Sigmoid colon (tissue), 7 donors: ENCODE measurements at regions of chr2 and their contacts with region 1.

Region 1: GRCh38 chr2:160970052-160970965 is 189.9 kb upstream of the TANK start:
- DNase-seq: no peak
- H3K4me3 ChIP-seq: peak overlapping the region in 2 of 4 donors; percentile 5 to 24
- H3K27ac ChIP-seq: peak overlapping the region; percentile 44 to 67 (median 48)
- H3K4me1 ChIP-seq: peaks cover 0 to 12% (median 6%) of the 10 kb centered on the region in 4 donors
- H3K27me3 ChIP-seq: no peaks in the 10 kb centered on the region
- CTCF ChIP-seq: peak; percentile 53 to 73 (median 68)
- EP300 ChIP-seq: no peak
- POLR2A ChIP-seq: no peak

Region 2: GRCh38 chr2:160252278-160252887 is 717.9 kb before region 1 on chr2:
- intact Hi-C with region 1: loop called (anchors 1 kb)
- DNase-seq: no peak
- H3K4me3 ChIP-seq: no peak overlapping the region
- H3K27ac ChIP-seq: no peak overlapping the region
- H3K4me1 ChIP-seq: peaks cover 0 to 15% (median 8%) of the 10 kb centered on the region in 4 donors
- H3K27me3 ChIP-seq: no peaks in the 10 kb centered on the region
- CTCF ChIP-seq: peak; percentile 70 to 84 (median 80)
- EP300 ChIP-seq: no peak
- POLR2A ChIP-seq: no peak

Region 3: GRCh38 chr2:160324161-160324800 is 646.0 kb before region 1 on chr2:
- intact Hi-C with region 1: loop called (anchors 5 kb)
- DNase-seq: peak; percentile 77
- H3K4me3 ChIP-seq: no peak overlapping the region
- H3K27ac ChIP-seq: peak overlapping the region in 2 of 4 donors; percentile 51 to 57
- H3K4me1 ChIP-seq: peaks cover 0 to 71% (median 62%) of the 10 kb centered on the region in 4 donors
- H3K27me3 ChIP-seq: no peaks in the 10 kb centered on the region
- CTCF ChIP-seq: peak; percentile 51 to 70 (median 64)
- EP300 ChIP-seq: no peak
- POLR2A ChIP-seq: no peak

Region 4: GRCh38 chr2:160406591-160407392 is 563.5 kb before region 1 on chr2:
- intact Hi-C with region 1: loop called (anchors 2 kb)
- DNase-seq: peak; percentile 80
- H3K4me3 ChIP-seq: peak overlapping the region; percentile 76 to 100 (median 96)
- H3K27ac ChIP-seq: peak overlapping the region; percentile 95 to 99 (median 98)
- H3K4me1 ChIP-seq: peaks cover 0 to 74% (median 63%) of the 10 kb centered on the region in 4 donors
- H3K27me3 ChIP-seq: no peaks in the 10 kb centered on the region
- CTCF ChIP-seq: no peak
- EP300 ChIP-seq: no peak
- POLR2A ChIP-seq: peak; percentile 26 to 46

Region 5: GRCh38 chr2:160666154-160667060 is 303.9 kb before region 1 on chr2:
- intact Hi-C with region 1: loop called (anchors 10 kb)
- DNase-seq: no peak
- H3K4me3 ChIP-seq: peak overlapping the region in 3 of 4 donors; percentile 8 to 22 (median 19)
- H3K27ac ChIP-seq: peak overlapping the region; percentile 72 to 88 (median 82)
- H3K4me1 ChIP-seq: peaks cover 0 to 23% (median 19%) of the 10 kb centered on the region in 4 donors
- H3K27me3 ChIP-seq: no peaks in the 10 kb centered on the region
- CTCF ChIP-seq: no peak
- EP300 ChIP-seq: peak; percentile 9 to 93 (median 76)
- POLR2A ChIP-seq: no peak

Region 6: DNA sequence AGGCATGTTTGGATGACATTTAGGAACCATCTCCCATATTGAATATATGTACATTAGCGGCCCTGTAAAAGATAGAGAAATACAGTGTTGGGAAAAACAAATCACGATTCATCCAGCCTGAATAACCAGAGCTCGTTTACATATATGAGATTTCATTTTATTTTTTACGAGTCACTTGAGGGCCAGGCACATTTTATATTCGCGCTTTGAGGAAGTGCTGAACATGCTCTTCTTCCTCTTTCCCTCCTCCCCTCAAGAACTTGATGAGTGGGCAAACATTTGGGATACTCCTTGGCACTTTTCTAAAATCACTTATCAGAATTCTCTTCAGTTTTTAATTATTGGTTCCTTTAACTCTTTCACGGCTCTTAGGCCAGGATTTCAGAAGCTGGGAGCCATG is 78.1 kb before region 1 on chr2:
- intact Hi-C with region 1: no loop called
- DNase-seq: no peak
- H3K4me3 ChIP-seq: no peak overlapping the region
- H3K27ac ChIP-seq: no peak overlapping the region
- H3K4me1 ChIP-seq: no peaks in the 10 kb centered on the region
- H3K27me3 ChIP-seq: no peaks in the 10 kb centered on the region
- CTCF ChIP-seq: no peak
- EP300 ChIP-seq: no peak
- POLR2A ChIP-seq: no peak